ENCODE measurements at regions of chr1 and their contacts with region 1.

Region 1: GRCh38 chr1:234925440-234926263 is 203.0 kb downstream of the TOMM20 start:
- DNase-seq: peak; percentile 46
- H3K4me3 Mint-ChIP-seq: peak overlapping the region; percentile 66
- H3K27ac Mint-ChIP-seq: peak overlapping the region; percentile 98
- H3K4me1 Mint-ChIP-seq: peaks cover 54% of the 10 kb centered on the region
- H3K27me3 Mint-ChIP-seq: no peaks in the 10 kb centered on the region

Region 2: DNA sequence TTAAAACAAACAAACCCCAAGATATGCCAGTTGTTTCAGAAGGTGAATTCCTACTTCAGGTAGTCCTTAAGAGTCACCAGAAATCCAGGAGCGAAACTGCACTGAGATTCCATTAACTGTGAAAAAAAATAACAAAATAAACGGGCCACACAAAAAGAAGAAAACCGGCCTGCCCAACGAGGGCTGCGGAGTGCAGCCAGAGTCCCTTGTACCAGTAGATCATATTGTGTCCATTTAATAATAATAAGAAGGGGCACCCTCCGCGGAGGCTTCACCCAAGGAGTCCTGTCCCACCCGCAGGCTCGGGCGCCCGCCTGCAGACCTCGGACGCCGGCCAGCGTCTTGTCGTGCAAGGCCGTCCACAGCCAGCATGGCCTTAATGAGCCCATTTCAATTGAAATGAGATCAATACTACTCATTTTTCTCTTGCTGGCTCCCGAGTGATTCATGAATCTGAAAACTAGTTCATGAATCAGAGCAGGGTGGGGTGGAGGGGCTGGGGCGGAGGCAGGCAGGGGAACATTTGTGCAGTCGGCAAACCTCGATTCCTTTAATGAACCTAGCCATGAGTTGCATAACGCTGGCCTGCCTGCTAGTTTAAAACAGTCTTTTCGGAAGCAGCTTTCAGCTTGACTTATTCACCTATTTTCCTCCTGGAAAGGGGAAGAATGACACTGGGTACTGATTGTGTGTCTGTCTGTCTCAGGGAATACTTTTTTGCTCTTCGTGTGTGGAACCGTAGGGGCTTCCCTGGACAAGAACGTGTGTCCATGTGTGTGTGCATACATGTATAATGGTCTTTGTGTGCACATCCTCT is 202.5 kb before region 1 on chr1:
- CTCF ChIA-PET with region 1: interaction called, 3 read pairs
- POLR2A ChIA-PET with region 1: interaction called, 8 read pairs
- intact Hi-C with region 1: loop called (anchors 1 kb)
- DNase-seq: peak; percentile 91
- H3K4me3 Mint-ChIP-seq: peak overlapping the region; percentile 60
- H3K27ac Mint-ChIP-seq: peak overlapping the region; percentile 96
- H3K4me1 Mint-ChIP-seq: peaks cover 66% of the 10 kb centered on the region
- H3K27me3 Mint-ChIP-seq: no peaks in the 10 kb centered on the region

Region 3: GRCh38 chr1:234730770-234731568 is 194.7 kb before region 1 on chr1:
- CTCF ChIA-PET with region 1: no interaction called
- POLR2A ChIA-PET with region 1: no interaction called
- intact Hi-C with region 1: loop called (anchors 2 kb)
- DNase-seq: peak; percentile 78
- H3K4me3 Mint-ChIP-seq: peak overlapping the region; percentile 40
- H3K27ac Mint-ChIP-seq: peak overlapping the region; percentile 99
- H3K4me1 Mint-ChIP-seq: peaks cover 77% of the 10 kb centered on the region
- H3K27me3 Mint-ChIP-seq: no peaks in the 10 kb centered on the region

Region 4: GRCh38 chr1:234772345-234773147 is 153.1 kb before region 1 on chr1:
- CTCF ChIA-PET with region 1: interaction called, 4 read pairs
- POLR2A ChIA-PET with region 1: interaction called, 3 read pairs
- intact Hi-C with region 1: loop called (anchors 5 kb)
- DNase-seq: peak; percentile 95
- H3K4me3 Mint-ChIP-seq: peak overlapping the region; percentile 49
- H3K27ac Mint-ChIP-seq: peak overlapping the region; percentile 84
- H3K4me1 Mint-ChIP-seq: peaks cover 54% of the 10 kb centered on the region
- H3K27me3 Mint-ChIP-seq: no peaks in the 10 kb centered on the region

Region 5: DNA sequence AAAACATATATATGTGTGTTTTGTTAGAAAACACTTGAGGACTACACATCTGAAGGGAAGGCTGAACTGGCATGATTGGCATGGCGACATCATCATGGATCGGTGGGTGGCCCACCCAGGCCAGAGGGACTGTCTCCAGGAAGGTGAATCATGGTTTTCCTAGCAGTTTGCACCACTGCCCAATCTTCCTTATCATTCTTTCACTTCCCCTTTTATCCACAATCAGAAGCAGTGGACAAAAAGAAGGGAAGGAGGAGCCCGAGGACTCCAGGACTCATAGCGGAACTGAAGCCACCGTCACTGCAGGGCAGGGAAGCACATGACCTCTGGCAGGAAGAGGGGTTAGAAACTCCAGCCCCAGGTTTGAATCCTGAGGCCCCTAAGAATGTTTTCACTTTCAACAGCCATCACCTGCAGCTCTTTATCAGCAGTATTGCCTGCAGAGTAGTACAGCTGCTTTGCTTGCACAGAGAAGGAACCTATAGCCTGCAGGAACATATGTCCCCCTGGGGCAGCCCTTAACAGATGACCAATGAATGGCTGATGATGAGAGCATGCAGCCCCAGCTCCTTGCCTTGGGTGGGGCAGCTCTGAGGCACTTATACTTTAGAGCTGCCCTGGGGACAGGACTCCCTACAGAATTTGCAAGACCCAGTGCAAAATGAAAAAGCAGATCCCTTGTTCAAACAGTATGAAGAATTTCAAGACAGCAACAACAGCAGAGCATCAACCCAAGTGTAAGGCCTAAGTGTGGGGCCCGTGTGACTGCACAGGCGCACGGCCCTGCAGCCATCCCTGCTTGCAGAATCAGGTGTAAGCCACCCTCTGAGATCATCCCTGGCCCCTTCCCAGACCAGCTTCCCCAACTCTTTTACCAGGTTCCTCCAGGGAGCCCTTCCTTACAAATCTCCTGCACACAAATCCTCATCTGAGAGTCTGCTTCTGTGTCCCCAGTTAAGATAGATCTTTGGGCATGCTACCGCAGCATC is 73.9 kb before region 1 on chr1:
- CTCF ChIA-PET with region 1: no interaction called
- POLR2A ChIA-PET with region 1: no interaction called
- intact Hi-C with region 1: no loop called
- DNase-seq: peak; percentile 47
- H3K4me3 Mint-ChIP-seq: no peak overlapping the region
- H3K27ac Mint-ChIP-seq: no peak overlapping the region
- H3K4me1 Mint-ChIP-seq: peaks cover 54% of the 10 kb centered on the region
- H3K27me3 Mint-ChIP-seq: no peaks in the 10 kb centered on the region

Region 6: GRCh38 chr1:234881893-234882771 is 43.5 kb before region 1 on chr1:
- CTCF ChIA-PET with region 1: no interaction called
- POLR2A ChIA-PET with region 1: interaction called, 3 read pairs
- intact Hi-C with region 1: loop called (anchors 1 kb)
- DNase-seq: peak; percentile 72
- H3K4me3 Mint-ChIP-seq: no peak overlapping the region
- H3K27ac Mint-ChIP-seq: peak overlapping the region; percentile 59
- H3K4me1 Mint-ChIP-seq: peaks cover 40% of the 10 kb centered on the region
- H3K27me3 Mint-ChIP-seq: no peaks in the 10 kb centered on the region

Region 7: GRCh38 chr1:234897754-234898454 is 27.7 kb before region 1 on chr1:
- CTCF ChIA-PET with region 1: no interaction called
- POLR2A ChIA-PET with region 1: no interaction called
- intact Hi-C with region 1: no loop called
- DNase-seq: no peak
- H3K4me3 Mint-ChIP-seq: no peak overlapping the region
- H3K27ac Mint-ChIP-seq: no peak overlapping the region
- H3K4me1 Mint-ChIP-seq: peaks cover 13% of the 10 kb centered on the region
- H3K27me3 Mint-ChIP-seq: no peaks in the 10 kb centered on the region

Region 8: DNA sequence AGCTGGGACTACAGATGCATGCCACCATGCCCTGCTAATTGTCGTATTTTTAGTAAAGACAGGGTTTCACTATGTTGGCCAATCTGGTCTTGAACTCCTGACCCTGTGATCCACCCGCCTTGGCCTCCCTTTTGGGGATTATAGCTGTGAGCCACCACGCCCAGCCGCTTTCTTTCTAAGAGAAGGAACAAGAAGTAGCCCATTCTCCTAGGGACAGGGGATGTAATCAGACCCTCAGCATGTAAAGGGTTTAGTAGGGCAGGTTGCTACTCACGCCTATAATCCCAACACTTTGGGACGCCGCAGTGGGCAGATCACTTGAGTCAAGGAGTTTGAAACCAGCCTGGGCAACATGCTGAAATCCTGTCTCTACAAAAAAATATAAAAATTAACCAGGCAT is 13.3 kb after region 1 on chr1:
- CTCF ChIA-PET with region 1: no interaction called
- POLR2A ChIA-PET with region 1: interaction called, 12 read pairs
- intact Hi-C with region 1: loop called (anchors 1 kb)
- DNase-seq: peak; percentile 7
- H3K4me3 Mint-ChIP-seq: no peak overlapping the region
- H3K27ac Mint-ChIP-seq: no peak overlapping the region
- H3K4me1 Mint-ChIP-seq: peaks cover 36% of the 10 kb centered on the region
- H3K27me3 Mint-ChIP-seq: no peaks in the 10 kb centered on the region

Region 9: GRCh38 chr1:234978397-234979295 is 53.0 kb after region 1 on chr1:
- CTCF ChIA-PET with region 1: no interaction called
- POLR2A ChIA-PET with region 1: interaction called, 17 read pairs
- intact Hi-C with region 1: no loop called
- DNase-seq: peak; percentile 86
- H3K4me3 Mint-ChIP-seq: peak overlapping the region; percentile 90
- H3K27ac Mint-ChIP-seq: peak overlapping the region; percentile 97
- H3K4me1 Mint-ChIP-seq: peaks cover 80% of the 10 kb centered on the region
- H3K27me3 Mint-ChIP-seq: no peaks in the 10 kb centered on the region